ENCODE measurements at regions of chr10 and their contacts with region 1.

Region 1: DNA sequence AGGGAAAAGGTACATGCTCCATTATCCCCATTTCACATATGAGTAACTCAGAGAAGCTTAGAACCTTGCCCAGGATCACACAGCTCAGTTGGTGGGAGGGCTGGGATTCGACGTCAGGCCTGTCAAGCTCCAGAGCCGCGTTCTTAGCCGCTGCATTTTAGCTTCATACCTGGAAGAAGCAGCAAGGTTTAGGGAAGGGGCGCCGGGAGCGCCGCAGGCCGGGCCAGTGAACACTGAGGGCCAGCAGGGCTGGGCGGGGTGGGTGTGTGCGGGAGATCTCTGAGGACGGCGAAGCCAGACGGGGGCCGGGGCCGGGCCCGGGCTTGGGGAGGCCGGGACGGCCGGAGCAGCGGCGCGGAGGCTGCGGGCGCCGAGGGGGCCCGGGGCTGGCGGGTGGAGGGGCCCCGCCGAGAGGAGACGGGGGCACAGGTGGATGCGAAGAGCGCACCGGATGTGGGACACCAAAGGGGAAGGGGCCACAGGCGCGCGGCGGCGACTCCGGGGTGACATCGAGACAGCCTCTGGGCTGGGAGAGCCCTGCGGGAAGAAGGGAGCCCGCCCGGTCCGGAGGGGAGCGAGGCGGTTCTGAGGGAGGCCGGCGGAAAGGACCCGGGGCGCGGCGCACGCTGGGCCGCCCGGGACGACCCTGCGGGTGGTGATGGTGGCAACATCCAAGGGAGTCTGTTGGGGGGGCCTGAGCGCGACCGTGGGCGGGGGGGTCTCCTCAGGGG is 498 bp downstream of the NDST2 start:
- DNase-seq: peak; percentile 66
- H3K4me3 Mint-ChIP-seq: peak overlapping the region; percentile 91
- H3K27ac Mint-ChIP-seq: peak overlapping the region; percentile 95
- H3K4me1 Mint-ChIP-seq: peaks cover 45% of the 10 kb centered on the region
- H3K27me3 Mint-ChIP-seq: no peaks in the 10 kb centered on the region

Region 2: GRCh38 chr10:73424516-73424915 is 386.4 kb before region 1 on chr10:
- CTCF ChIA-PET with region 1: no interaction called
- POLR2A ChIA-PET with region 1: no interaction called
- DNase-seq: no peak
- H3K4me3 Mint-ChIP-seq: no peak overlapping the region
- H3K27ac Mint-ChIP-seq: no peak overlapping the region
- H3K4me1 Mint-ChIP-seq: no peaks in the 10 kb centered on the region
- H3K27me3 Mint-ChIP-seq: no peaks in the 10 kb centered on the region

Region 3: DNA sequence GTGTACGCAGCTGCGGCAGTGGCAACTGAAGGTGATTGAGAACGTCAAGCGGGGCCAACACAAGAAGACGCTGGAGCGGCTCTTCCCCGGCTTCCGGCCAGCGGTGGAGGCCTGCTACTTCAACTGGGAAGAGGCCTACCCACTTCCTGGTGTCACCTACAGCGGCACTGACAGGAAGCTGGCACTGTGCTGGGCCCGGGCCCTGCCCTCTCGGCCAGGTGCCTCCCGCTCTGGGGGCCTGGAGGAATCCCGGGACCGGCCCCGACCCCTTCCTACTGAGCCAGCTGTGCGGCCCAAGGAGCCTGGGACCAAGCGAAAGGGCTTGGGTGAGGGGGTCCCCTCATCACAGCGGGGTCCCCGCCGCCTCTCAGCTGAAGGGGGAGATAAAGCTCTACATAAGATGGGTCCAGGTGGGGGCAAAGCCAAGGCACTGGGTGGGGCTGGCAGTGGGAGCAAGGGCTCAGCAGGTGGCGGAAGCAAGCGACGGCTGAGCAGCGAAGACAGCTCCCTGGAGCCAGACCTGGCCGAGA is 19.0 kb before region 1 on chr10:
- CTCF ChIA-PET with region 1: no interaction called
- POLR2A ChIA-PET with region 1: interaction called, 73 read pairs
- DNase-seq: no peak
- H3K4me3 Mint-ChIP-seq: no peak overlapping the region
- H3K27ac Mint-ChIP-seq: no peak overlapping the region
- H3K4me1 Mint-ChIP-seq: peaks cover 11% of the 10 kb centered on the region
- H3K27me3 Mint-ChIP-seq: no peaks in the 10 kb centered on the region

Measured in activated CD4-positive, alpha-beta memory T cell treated with anti-CD3 and anti-CD28 coated beads, Interleukin-2, amount 10 ng/mL, durations not matched to agents 7 days and 5 days (primary cell).